IMR-90 (cell line): ENCODE measurements at regions of chr3 and their contacts with region 1.

Region 1: DNA sequence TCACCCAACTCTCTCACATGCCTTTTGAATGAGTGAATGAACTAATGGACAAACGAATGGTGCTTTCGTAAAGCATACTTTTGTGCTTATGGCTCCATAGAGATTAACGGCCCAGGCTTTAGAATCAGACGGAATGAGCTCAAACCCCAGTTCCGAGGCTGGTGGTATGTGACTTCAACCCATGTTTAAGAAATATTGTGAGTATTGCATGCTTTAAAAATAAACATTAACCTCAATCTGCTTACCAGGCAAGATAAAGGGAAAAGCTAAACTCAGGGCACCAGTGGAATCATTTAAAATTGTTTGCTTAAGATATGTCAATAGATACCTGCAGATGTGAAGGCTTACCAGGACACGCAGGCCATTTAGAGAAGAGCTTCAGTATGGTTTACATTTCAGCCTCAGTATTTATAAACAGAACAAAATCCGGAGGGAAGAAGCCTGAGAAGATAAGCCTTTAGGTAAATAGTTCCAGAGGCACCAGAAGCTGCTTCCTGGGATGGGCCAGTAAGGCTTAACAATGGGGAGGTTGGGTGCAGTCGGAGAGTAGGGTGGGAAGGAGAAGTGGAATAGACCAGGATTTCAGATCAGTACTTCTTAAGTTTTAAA is 186.4 kb downstream of the ADAMTS9 start:
- DNase-seq: peak; percentile 97
- ATAC-seq: peak; percentile 88
- H3K4me3 ChIP-seq: no peak overlapping the region
- H3K27ac ChIP-seq: peak overlapping the region; percentile 97
- H3K4me1 ChIP-seq: peaks cover 9% of the 10 kb centered on the region
- H3K27me3 ChIP-seq: no peaks in the 10 kb centered on the region
- CTCF ChIP-seq: no peak
- POLR2A ChIP-seq: no peak
- RAD21 ChIP-seq: no peak

Region 2: GRCh38 chr3:64518950-64519349 is 17.5 kb after region 1 on chr3:
- CTCF ChIA-PET with region 1: no interaction called
- POLR2A ChIA-PET with region 1: no interaction called
- dilution Hi-C with region 1: no loop called
- in situ Hi-C with region 1: no loop called
- intact Hi-C with region 1: loop called (anchors 2 kb)
- DNase-seq: peak; percentile 41
- ATAC-seq: peak; percentile 86
- H3K4me3 ChIP-seq: no peak overlapping the region
- H3K27ac ChIP-seq: peak overlapping the region; percentile 64
- H3K4me1 ChIP-seq: peaks cover 2% of the 10 kb centered on the region; the same call in 1 of the 2 replicates
- H3K27me3 ChIP-seq: no peaks in the 10 kb centered on the region
- CTCF ChIP-seq: no peak
- POLR2A ChIP-seq: no peak
- RAD21 ChIP-seq: no peak